CD4-positive, alpha-beta memory T cell (primary cell): ENCODE measurements at regions of chr19 and their contacts with region 1.

Region 1: DNA sequence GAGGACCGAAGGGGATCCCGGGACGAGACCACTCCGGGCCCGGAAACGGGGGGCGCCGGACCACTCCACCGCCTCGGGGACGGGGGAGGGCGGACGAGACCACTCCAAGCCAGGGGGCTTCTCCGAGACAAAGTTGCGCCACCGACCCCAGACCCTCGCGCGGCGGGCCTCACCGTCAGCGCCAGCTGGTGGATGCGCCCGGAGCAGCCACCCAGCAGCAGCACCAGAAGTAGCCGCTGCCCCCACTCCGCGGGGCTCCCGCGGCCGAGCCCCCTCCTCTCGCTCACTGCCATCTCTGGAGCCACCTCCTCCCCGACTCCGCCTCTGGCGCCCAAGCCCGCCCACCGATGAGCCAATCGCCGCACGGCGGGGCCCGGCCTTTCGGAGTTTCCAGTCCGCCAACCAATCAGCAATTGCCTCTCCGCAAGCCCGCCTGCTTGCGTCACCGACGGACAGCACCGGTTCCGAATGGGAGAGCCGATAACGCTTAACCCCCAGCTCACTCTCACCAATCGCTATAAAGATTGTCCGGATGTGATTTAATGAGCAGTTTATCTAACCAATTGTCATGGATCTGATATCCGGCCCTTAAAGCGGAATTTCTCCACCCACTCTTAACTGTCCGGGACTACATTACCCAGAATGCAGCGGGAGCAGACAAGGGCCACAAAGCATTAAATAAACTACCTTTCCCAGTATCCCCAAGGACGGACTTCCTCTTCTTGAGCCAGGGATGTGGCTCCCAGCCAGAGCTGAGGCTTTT is at the start of gene GPR108:
- DNase-seq: peak; percentile 98 to 100 (median 99)
- H3K4me3 ChIP-seq: peak within 1 kb of the TSS; percentile 58 to 80
- H3K4me3 Mint-ChIP-seq: peak within 1 kb of the TSS; percentile 95 to 99 (median 97)
- H3K27ac ChIP-seq: peak within 1 kb of the TSS; percentile 94
- H3K27ac Mint-ChIP-seq: peak within 1 kb of the TSS; percentile 93 to 99 (median 98)
- H3K4me1 ChIP-seq: peaks cover 50% of the 10 kb centered on the region
- H3K4me1 Mint-ChIP-seq: peaks cover 17 to 52% (median 35%) of the 10 kb centered on the region in 4 donors
- H3K27me3 ChIP-seq: no peaks in the 10 kb centered on the region
- H3K27me3 Mint-ChIP-seq: no peaks in the 10 kb centered on the region
- total RNA-seq, gene GPR108: 75.6 to 85.3 TPM

Region 2: GRCh38 chr19:6460101-6460853 is 277.2 kb before region 1 on chr19:
- CTCF ChIA-PET with region 1: no interaction called
- POLR2A ChIA-PET with region 1: no interaction called
- intact Hi-C with region 1: loop called (anchors 2 kb)
- DNase-seq: peak; percentile 97 to 98 (median 97)
- H3K4me3 ChIP-seq: peak overlapping the region; percentile 85 to 90
- H3K4me3 Mint-ChIP-seq: peak overlapping the region; percentile 93 to 99 (median 96)
- H3K27ac ChIP-seq: peak overlapping the region; percentile 70
- H3K27ac Mint-ChIP-seq: peak overlapping the region; percentile 86 to 99 (median 93)
- H3K4me1 ChIP-seq: peaks cover 24% of the 10 kb centered on the region
- H3K4me1 Mint-ChIP-seq: peaks cover 12 to 45% (median 25%) of the 10 kb centered on the region in 4 donors
- H3K27me3 ChIP-seq: no peaks in the 10 kb centered on the region
- H3K27me3 Mint-ChIP-seq: no peaks in the 10 kb centered on the region

Region 3: GRCh38 chr19:6632002-6632621 is 105.4 kb before region 1 on chr19:
- CTCF ChIA-PET with region 1: interaction called, 62 read pairs
- POLR2A ChIA-PET with region 1: no interaction called
- intact Hi-C with region 1: loop called (anchors 1 kb)
- DNase-seq: peak; percentile 78 to 86 (median 82)
- H3K4me3 ChIP-seq: no peak overlapping the region
- H3K4me3 Mint-ChIP-seq: no peak overlapping the region
- H3K27ac ChIP-seq: no peak overlapping the region
- H3K27ac Mint-ChIP-seq: peak overlapping the region in 3 of 7 donors; percentile 3 to 24 (median 22)
- H3K4me1 ChIP-seq: peaks cover 7% of the 10 kb centered on the region
- H3K4me1 Mint-ChIP-seq: peaks cover 8 to 15% (median 10%) of the 10 kb centered on the region in 4 donors
- H3K27me3 ChIP-seq: no peaks in the 10 kb centered on the region
- H3K27me3 Mint-ChIP-seq: peaks cover 1 to 2% of the 10 kb centered on the region in 2 donors

Region 4: DNA sequence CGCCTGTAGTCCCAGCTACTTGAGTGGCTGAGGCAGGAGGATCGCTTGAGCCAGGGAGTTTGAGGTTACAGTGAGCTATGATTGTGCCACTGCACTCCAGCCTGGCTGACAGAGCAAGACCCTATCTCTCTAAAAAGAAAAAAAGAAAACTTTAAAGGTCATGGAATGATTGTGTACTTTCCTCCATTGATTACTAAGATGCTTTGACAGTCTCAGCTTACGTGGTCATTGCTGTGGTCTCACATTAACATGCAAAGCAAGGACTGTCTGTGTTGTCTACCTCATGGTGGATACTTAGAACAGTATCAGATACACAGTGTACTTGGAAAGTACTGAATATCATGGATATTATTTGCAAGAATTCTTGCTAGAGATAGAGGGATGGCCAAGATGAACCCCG is 53.5 kb before region 1 on chr19:
- CTCF ChIA-PET with region 1: no interaction called
- POLR2A ChIA-PET with region 1: no interaction called
- intact Hi-C with region 1: no loop called
- DNase-seq: no peak
- H3K4me3 ChIP-seq: no peak overlapping the region
- H3K4me3 Mint-ChIP-seq: no peak overlapping the region
- H3K27ac ChIP-seq: no peak overlapping the region
- H3K27ac Mint-ChIP-seq: peak overlapping the region in 1 of 7 donors; percentile 74
- H3K4me1 ChIP-seq: no peaks in the 10 kb centered on the region
- H3K4me1 Mint-ChIP-seq: peaks cover 6 to 16% (median 12%) of the 10 kb centered on the region in 4 donors
- H3K27me3 ChIP-seq: no peaks in the 10 kb centered on the region
- H3K27me3 Mint-ChIP-seq: no peaks in the 10 kb centered on the region

Region 5: GRCh38 chr19:6753178-6754031 is 15.9 kb after region 1 on chr19:
- CTCF ChIA-PET with region 1: no interaction called
- POLR2A ChIA-PET with region 1: interaction called, 6 read pairs
- intact Hi-C with region 1: loop called (anchors 1 kb)
- DNase-seq: peak; percentile 71 to 77 (median 72)
- H3K4me3 ChIP-seq: peak overlapping the region in 1 of 2 donors; percentile 49
- H3K4me3 Mint-ChIP-seq: peak overlapping the region; percentile 57 to 78 (median 70)
- H3K27ac ChIP-seq: peak overlapping the region; percentile 38
- H3K27ac Mint-ChIP-seq: peak overlapping the region; percentile 77 to 93 (median 86)
- H3K4me1 ChIP-seq: no peaks in the 10 kb centered on the region
- H3K4me1 Mint-ChIP-seq: peaks cover 5 to 12% (median 8%) of the 10 kb centered on the region in 4 donors
- H3K27me3 ChIP-seq: no peaks in the 10 kb centered on the region
- H3K27me3 Mint-ChIP-seq: no peaks in the 10 kb centered on the region

Region 6: DNA sequence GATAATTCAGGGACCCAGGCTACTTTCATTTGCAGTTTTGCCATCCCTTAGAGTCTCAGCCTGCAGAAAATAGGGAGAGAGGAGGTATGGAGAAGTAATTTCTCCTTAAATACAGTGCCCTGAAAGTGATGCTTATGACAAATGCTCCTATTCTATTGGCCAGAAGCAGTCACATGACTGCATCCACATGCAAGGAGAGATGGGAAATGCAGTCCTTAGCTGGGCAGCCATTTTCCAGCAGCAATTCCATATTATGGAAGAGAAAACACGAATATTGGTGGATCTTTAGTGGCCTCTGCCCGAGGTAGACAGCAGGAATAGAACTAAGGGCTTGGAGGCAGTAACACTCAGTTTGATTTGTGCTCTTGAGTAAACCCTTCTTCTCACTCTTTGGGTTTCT is 74.4 kb after region 1 on chr19:
- CTCF ChIA-PET with region 1: interaction called, 8 read pairs
- POLR2A ChIA-PET with region 1: interaction called, 17 read pairs
- intact Hi-C with region 1: no loop called
- DNase-seq: peak in 2 of 5 donors; percentile 22 to 29
- H3K4me3 ChIP-seq: no peak overlapping the region
- H3K4me3 Mint-ChIP-seq: peak overlapping the region in 3 of 8 donors; percentile 43 to 83 (median 61)
- H3K27ac ChIP-seq: no peak overlapping the region
- H3K27ac Mint-ChIP-seq: peak overlapping the region; percentile 44 to 94 (median 90)
- H3K4me1 ChIP-seq: peaks cover 51% of the 10 kb centered on the region
- H3K4me1 Mint-ChIP-seq: peaks cover 47 to 83% (median 62%) of the 10 kb centered on the region in 4 donors
- H3K27me3 ChIP-seq: no peaks in the 10 kb centered on the region
- H3K27me3 Mint-ChIP-seq: no peaks in the 10 kb centered on the region